ENCODE measurements at regions of chr7 and their contacts with region 1.

Region 1: DNA sequence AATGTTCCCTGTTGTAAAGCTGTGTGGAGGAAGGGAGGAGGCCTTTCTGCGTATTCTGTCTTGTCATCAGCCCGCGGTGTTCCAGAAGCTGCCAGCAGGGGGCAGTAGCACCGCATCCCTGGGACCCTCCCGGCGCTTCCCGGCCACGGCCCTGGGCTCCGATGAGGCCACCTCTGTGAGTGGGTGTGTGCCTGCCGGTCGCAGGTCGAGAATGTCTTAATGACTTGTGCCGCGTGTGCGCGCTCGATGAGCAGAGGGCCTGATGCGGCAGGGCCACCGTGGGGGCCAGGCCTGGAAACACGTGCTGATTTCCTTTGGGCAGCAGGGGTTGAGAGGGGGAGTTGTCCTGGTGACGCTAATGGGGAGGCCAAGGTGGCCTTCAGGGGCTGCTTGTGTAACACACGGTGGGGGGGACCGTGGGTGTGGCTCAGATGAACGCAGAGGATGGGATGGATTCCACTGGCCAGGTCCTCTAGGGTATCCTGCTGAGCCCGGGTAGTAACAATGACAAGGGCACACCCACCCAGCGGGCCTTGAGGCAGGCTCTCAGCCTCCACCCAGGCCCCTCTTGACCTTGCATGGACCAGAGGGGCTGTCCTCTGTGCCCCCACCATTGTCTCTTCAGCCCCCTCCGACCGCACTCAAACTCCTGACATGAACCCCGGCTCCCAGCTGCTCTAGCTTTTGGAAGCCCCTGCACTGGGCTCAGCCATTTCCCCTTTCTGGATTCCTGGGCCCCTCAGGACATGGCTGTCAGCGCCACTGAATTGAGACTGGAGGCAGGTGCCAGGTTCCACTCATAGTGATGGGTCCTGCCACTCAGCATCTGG is 135.9 kb upstream of the PODXL start:
- DNase-seq: peak; percentile 53
- ATAC-seq: peak; percentile 51
- H3K4me3 Mint-ChIP-seq: no peak overlapping the region
- H3K27ac Mint-ChIP-seq: no peak overlapping the region
- H3K4me1 Mint-ChIP-seq: peaks cover 3% of the 10 kb centered on the region
- H3K27me3 Mint-ChIP-seq: peaks cover 11% of the 10 kb centered on the region

Region 2: DNA sequence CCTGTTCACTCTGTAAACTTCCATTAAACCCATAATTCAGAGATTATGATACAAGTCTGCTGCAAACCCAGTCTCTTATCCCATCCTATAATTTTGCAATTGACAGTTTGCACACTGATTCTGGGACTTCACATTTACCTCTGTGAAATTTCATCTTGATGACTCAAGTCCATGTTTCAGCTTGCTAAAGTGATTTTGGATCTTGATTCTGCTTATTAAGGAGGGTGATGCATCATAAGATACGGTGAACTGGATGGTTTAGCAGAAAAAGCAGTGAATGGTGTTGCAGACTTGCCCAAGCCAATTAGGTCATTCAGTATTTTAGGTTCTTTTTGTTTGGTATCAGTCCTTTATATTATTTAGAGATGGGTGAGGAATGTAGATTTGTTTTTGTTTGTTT is 10.4 kb before region 1 on chr7:
- CTCF ChIA-PET with region 1: interaction called, 13 read pairs
- DNase-seq: no peak
- ATAC-seq: no peak
- H3K4me3 Mint-ChIP-seq: no peak overlapping the region
- H3K27ac Mint-ChIP-seq: no peak overlapping the region
- H3K4me1 Mint-ChIP-seq: no peaks in the 10 kb centered on the region
- H3K27me3 Mint-ChIP-seq: peaks cover 19% of the 10 kb centered on the region

Measured in activated CD8-positive, alpha-beta memory T cell treated with anti-CD3 and anti-CD28 coated beads, Interleukin-2, amount 10 ng/mL, durations not matched to agents 7 days and 5 days (primary cell).